Pancreas (tissue), 10 donors: ENCODE measurements at regions of chr5 and their contacts with region 1.

Region 1: GRCh38 chr5:170782438-170782837 is 1.1 kb upstream of the GABRP start:
- DNase-seq: peak in 2 of 6 donors; percentile 34 to 44
- ATAC-seq: peak in 3 of 4 donors; percentile 53 to 56 (median 54)
- H3K4me3 ChIP-seq: no peak overlapping the region
- H3K27ac ChIP-seq: no peak overlapping the region
- H3K4me1 ChIP-seq: peaks cover 0 to 8% (median 0%) of the 10 kb centered on the region in 3 donors
- H3K27me3 ChIP-seq: no peaks in the 10 kb centered on the region
- CTCF ChIP-seq: no peak

Region 2: DNA sequence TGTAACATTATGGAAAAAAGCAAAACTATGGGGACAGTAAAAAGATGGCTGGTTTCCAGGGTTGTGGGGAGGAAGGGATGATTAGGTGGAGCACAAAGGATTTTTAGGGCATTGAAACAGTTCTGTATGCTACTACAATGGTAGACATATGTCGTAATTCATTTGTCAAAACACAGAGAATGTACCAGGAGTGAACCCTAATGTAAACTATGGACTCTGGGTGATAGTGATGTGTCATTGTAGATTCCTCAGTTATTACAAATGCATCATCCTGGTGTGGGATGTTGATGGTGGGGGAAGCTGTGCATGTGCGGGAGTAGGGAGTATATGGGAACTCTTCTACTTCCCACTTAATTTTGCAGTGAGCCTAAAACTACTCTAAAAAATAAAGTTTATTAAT is 133.9 kb before region 1 on chr5:
- intact Hi-C with region 1: loop called in 1 of 3 experiments (anchors 10 kb)
- DNase-seq: no peak
- ATAC-seq: no peak
- H3K4me3 ChIP-seq: no peak overlapping the region
- H3K27ac ChIP-seq: no peak overlapping the region
- H3K4me1 ChIP-seq: no peaks in the 10 kb centered on the region
- H3K27me3 ChIP-seq: peaks cover 0 to 3% (median under 1%) of the 10 kb centered on the region in 4 donors
- CTCF ChIP-seq: no peak

Region 3: GRCh38 chr5:170681013-170681433 is 101.4 kb before region 1 on chr5:
- intact Hi-C with region 1: no loop called
- DNase-seq: peak in 4 of 6 donors; percentile 2 to 65 (median 24)
- ATAC-seq: peak; percentile 67 to 91 (median 76)
- H3K4me3 ChIP-seq: no peak overlapping the region
- H3K27ac ChIP-seq: no peak overlapping the region
- H3K4me1 ChIP-seq: no peaks in the 10 kb centered on the region
- H3K27me3 ChIP-seq: peaks cover 0 to 3% (median 0%) of the 10 kb centered on the region in 4 donors
- CTCF ChIP-seq: no peak